CD4-positive, alpha-beta memory T cell (primary cell): ENCODE measurements at regions of chr9 and their contacts with region 1.

Region 1: GRCh38 chr9:97900738-97901565 is 21.3 kb downstream of the TRMO start:
- DNase-seq: peak; percentile 39 to 54 (median 43)
- H3K4me3 ChIP-seq: no peak overlapping the region
- H3K4me3 Mint-ChIP-seq: peak overlapping the region in 3 of 8 donors; percentile 20 to 59 (median 43)
- H3K27ac ChIP-seq: peak overlapping the region; percentile 21
- H3K27ac Mint-ChIP-seq: peak overlapping the region; percentile 75 to 93 (median 92)
- H3K4me1 ChIP-seq: peaks cover 59% of the 10 kb centered on the region
- H3K4me1 Mint-ChIP-seq: peaks cover 33 to 63% (median 45%) of the 10 kb centered on the region in 4 donors
- H3K27me3 ChIP-seq: no peaks in the 10 kb centered on the region
- H3K27me3 Mint-ChIP-seq: no peaks in the 10 kb centered on the region

Region 2: DNA sequence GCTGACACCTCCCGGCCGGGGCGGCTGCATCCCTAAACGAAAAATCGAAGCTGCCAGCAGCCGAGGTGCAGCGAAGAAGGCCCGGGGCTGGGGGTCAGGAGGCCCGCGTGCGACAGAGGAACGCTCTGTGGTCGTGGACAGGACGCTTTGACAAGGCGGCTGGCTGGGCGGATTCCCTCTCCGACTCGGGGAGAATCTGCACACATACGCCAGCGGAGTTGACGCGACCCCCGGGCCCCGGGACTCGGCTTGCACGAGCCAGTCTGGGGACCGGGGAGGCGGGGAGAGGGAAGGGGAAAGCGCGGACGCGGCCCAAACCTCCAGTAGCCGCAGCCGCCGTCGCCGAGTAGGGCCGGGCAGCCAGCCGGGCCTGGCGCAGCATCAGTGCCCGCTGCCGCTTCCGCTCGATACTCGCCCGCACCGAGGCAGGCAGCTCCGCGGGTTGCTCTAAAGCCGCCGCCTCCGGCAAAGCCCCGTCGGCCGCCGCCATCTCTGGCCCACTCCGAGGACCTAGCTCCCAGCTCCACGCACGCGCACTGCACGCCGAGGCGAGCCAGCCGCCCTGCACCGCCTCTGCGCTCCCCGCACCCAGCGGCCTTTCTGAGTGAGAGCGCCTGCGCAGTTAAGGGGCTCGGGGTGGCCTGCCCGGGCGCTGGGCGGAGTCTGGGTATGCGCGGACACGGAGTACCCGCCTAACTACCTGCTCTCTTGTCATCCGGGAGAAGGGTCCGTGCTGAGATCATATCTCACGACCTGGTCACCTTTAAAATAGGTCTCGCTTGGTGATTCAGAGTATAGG is 203.9 kb before region 1 on chr9 and contains the start of gene XPA:
- CTCF ChIA-PET with region 1: interaction called, 13 read pairs
- POLR2A ChIA-PET with region 1: interaction called, 16 read pairs
- intact Hi-C with region 1: loop called (anchors 5 kb)
- DNase-seq: peak; percentile 96 to 97 (median 96)
- H3K4me3 ChIP-seq: peak within 1 kb of the TSS; percentile 4 to 82
- H3K4me3 Mint-ChIP-seq: peak within 1 kb of the TSS; percentile 86 to 96 (median 92)
- H3K27ac ChIP-seq: peak within 1 kb of the TSS; percentile 68
- H3K27ac Mint-ChIP-seq: peak within 1 kb of the TSS; percentile 86 to 98 (median 96)
- H3K4me1 ChIP-seq: peaks cover 44% of the 10 kb centered on the region
- H3K4me1 Mint-ChIP-seq: peaks cover 41 to 56% (median 49%) of the 10 kb centered on the region in 4 donors
- H3K27me3 ChIP-seq: no peaks in the 10 kb centered on the region
- H3K27me3 Mint-ChIP-seq: no peaks in the 10 kb centered on the region
- total RNA-seq, gene XPA: 24.0 to 25.5 TPM

Region 3: DNA sequence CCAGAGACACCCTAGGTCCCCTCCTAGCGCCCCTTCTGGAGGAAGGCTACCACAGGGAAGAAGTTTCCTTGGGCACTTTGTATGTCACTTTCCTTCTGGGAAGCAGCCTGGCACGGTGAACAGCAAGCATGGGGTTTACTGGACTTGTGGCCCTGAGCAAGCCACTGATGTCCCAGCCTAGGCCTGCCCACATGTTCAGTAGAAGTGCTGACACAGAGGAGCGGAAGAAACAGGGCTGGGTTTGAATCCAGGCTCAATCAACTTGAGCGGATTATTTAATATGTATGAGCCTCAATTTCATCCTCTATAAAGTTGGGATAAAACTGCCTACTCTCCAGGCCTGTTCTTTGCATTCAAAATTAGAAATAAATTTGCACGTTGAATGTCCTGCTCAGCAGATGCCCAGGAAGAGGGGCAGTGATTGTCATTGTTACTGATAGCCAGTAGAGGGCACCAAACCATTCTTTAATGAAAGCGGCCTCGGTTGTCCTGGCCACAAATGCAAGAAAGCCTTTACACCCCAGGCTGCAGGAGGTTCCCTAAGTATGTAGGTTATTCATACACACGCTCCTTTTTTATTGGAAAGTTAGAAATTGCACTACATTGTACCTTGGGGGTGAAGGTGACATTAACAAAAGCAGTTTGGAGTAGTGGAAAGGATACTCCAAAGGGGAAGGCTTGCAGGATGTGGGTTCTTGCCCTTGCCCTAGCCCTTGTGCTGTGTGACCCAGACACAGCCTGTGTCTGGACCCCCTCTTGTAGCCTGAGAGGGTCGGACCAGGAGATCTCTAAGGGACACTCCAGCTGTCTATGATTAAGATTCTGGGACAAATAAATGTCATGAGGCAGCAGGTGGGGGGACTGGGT is 190.4 kb before region 1 on chr9:
- CTCF ChIA-PET with region 1: interaction called, 32 read pairs
- POLR2A ChIA-PET with region 1: interaction called, 4 read pairs
- intact Hi-C with region 1: loop called (anchors 1 kb)
- DNase-seq: peak; percentile 55 to 65 (median 60)
- H3K4me3 ChIP-seq: no peak overlapping the region
- H3K4me3 Mint-ChIP-seq: peak overlapping the region in 6 of 8 donors; percentile 13 to 55 (median 42)
- H3K27ac ChIP-seq: no peak overlapping the region
- H3K27ac Mint-ChIP-seq: peak overlapping the region in 3 of 7 donors; percentile 30 to 57 (median 45)
- H3K4me1 ChIP-seq: peaks cover 34% of the 10 kb centered on the region
- H3K4me1 Mint-ChIP-seq: peaks cover 23 to 44% (median 30%) of the 10 kb centered on the region in 4 donors
- H3K27me3 ChIP-seq: peaks cover 10% of the 10 kb centered on the region
- H3K27me3 Mint-ChIP-seq: peaks cover 4 to 7% of the 10 kb centered on the region in 2 donors

Region 4: DNA sequence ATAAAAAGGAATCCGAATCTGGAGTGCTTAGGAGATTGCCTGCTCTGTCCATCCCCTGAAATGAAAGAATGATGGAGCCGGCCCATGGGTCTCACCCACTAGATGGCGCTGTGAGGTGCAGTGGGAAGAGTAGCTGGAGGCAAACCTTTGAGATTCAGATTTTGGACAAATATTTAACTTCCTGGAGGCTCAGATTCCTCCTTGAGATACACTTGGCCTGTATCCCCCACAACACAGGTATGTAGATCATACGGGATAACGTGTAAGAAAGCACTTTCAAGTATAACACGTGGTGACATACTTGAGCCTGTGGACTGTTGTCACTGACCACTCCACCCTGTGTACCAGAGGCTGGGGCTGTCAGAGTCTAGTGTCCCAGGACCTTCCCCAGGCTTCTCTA is 10.9 kb before region 1 on chr9:
- CTCF ChIA-PET with region 1: interaction called, 312 read pairs
- POLR2A ChIA-PET with region 1: interaction called, 54 read pairs
- intact Hi-C with region 1: loop called (anchors 1 kb)
- DNase-seq: peak; percentile 52 to 61 (median 56)
- H3K4me3 ChIP-seq: no peak overlapping the region
- H3K4me3 Mint-ChIP-seq: no peak overlapping the region
- H3K27ac ChIP-seq: no peak overlapping the region
- H3K27ac Mint-ChIP-seq: peak overlapping the region in 3 of 7 donors; percentile 32 to 63 (median 58)
- H3K4me1 ChIP-seq: peaks cover 9% of the 10 kb centered on the region
- H3K4me1 Mint-ChIP-seq: peaks cover 2 to 13% (median 5%) of the 10 kb centered on the region in 4 donors
- H3K27me3 ChIP-seq: no peaks in the 10 kb centered on the region
- H3K27me3 Mint-ChIP-seq: no peaks in the 10 kb centered on the region

Region 5: GRCh38 chr9:98034593-98035546 is 133.9 kb after region 1 on chr9:
- CTCF ChIA-PET with region 1: interaction called, 13 read pairs
- POLR2A ChIA-PET with region 1: no interaction called
- intact Hi-C with region 1: no loop called
- DNase-seq: peak; percentile 80 to 88 (median 84)
- H3K4me3 ChIP-seq: no peak overlapping the region
- H3K4me3 Mint-ChIP-seq: peak overlapping the region in 3 of 8 donors; percentile 32 to 64 (median 38)
- H3K27ac ChIP-seq: no peak overlapping the region
- H3K27ac Mint-ChIP-seq: peak overlapping the region in 5 of 7 donors; percentile 28 to 64 (median 61)
- H3K4me1 ChIP-seq: peaks cover 6% of the 10 kb centered on the region
- H3K4me1 Mint-ChIP-seq: peaks cover 6 to 9% (median 6%) of the 10 kb centered on the region in 4 donors
- H3K27me3 ChIP-seq: no peaks in the 10 kb centered on the region
- H3K27me3 Mint-ChIP-seq: peaks cover 1 to 4% of the 10 kb centered on the region in 2 donors